ENCODE measurements at regions of chr17 and their contacts with region 1.

Region 1: GRCh38 chr17:57739402-57740392 is 5.4 kb downstream of the CCDC182 start:
- DNase-seq: no peak
- H3K4me3 ChIP-seq: no peak overlapping the region
- H3K27ac ChIP-seq: no peak overlapping the region
- H3K4me1 ChIP-seq: no peaks in the 10 kb centered on the region; a peak in 1 of 7 replicates
- H3K27me3 ChIP-seq: no peaks in the 10 kb centered on the region
- CTCF ChIP-seq: peak; percentile 3 to 72 (median 54)
- EP300 ChIP-seq: no peak
- POLR2A ChIP-seq: no peak
- RAD21 ChIP-seq: peak; percentile 66 to 73

Region 2: DNA sequence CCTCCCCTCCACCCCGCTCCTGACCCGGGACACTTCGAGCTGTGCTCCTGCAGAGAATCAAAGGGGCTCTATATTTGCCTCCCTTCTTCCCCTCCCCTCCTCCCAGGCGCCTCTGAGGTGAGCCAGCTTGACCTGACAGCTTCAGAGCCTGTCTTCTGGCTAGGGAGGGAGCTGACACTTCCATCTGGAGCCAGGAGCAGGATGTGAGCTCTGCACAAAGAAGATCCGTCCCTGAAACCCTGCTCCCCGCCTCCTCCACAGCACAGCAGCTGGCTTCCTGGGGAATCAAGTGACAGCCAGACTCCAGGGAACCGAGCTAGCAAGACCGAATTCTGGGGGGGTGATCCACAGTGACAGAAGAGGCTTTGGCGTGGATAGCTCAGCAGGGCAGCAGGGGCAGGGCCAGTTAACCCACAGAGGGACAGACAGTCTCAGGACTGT is 31.8 kb before region 1 on chr17:
- CTCF ChIA-PET with region 1: interaction called, 10 read pairs
- POLR2A ChIA-PET with region 1: no interaction called
- DNase-seq: peak in 1 of 2 experiments; percentile 60
- H3K4me3 ChIP-seq: peak overlapping the region in 2 of 4 experiments; percentile 9 to 36; a peak in 2 of 8 replicates
- H3K27ac ChIP-seq: no peak overlapping the region
- H3K4me1 ChIP-seq: peaks cover 0 to 11% (median 6%) of the 10 kb centered on the region in 4 experiments; a peak in 6 of 7 replicates
- H3K27me3 ChIP-seq: no peaks in the 10 kb centered on the region; a peak in 2 of 7 replicates
- CTCF ChIP-seq: peak in 1 of 3 experiments; percentile 7; a peak in 1 of 4 replicates
- EP300 ChIP-seq: no peak
- POLR2A ChIP-seq: no peak
- RAD21 ChIP-seq: no peak

Region 3: GRCh38 chr17:57761887-57762286 is 22.2 kb after region 1 on chr17:
- CTCF ChIA-PET with region 1: interaction called, 14 read pairs
- POLR2A ChIA-PET with region 1: interaction called, 3 read pairs
- DNase-seq: no peak
- H3K4me3 ChIP-seq: peak overlapping the region in 1 of 4 experiments; percentile 10; a peak in 2 of 8 replicates
- H3K27ac ChIP-seq: no peak overlapping the region
- H3K4me1 ChIP-seq: peaks cover 3 to 12% (median 7%) of the 10 kb centered on the region in 4 experiments
- H3K27me3 ChIP-seq: no peaks in the 10 kb centered on the region
- CTCF ChIP-seq: peak in 1 of 3 experiments; percentile 17; a peak in 1 of 4 replicates
- EP300 ChIP-seq: no peak
- POLR2A ChIP-seq: no peak
- RAD21 ChIP-seq: no peak

Region 4: GRCh38 chr17:57810721-57811637 is 71.3 kb after region 1 on chr17:
- CTCF ChIA-PET with region 1: no interaction called
- POLR2A ChIA-PET with region 1: no interaction called
- DNase-seq: no peak
- H3K4me3 ChIP-seq: no peak overlapping the region
- H3K27ac ChIP-seq: no peak overlapping the region
- H3K4me1 ChIP-seq: no peaks in the 10 kb centered on the region; a peak in 1 of 7 replicates
- H3K27me3 ChIP-seq: no peaks in the 10 kb centered on the region; a peak in 2 of 7 replicates
- CTCF ChIP-seq: no peak
- EP300 ChIP-seq: no peak
- POLR2A ChIP-seq: no peak
- RAD21 ChIP-seq: no peak

Measured in H1 (cell line).